B cell (primary cell): ENCODE measurements at regions of chr9 and their contacts with region 1.

Region 1: DNA sequence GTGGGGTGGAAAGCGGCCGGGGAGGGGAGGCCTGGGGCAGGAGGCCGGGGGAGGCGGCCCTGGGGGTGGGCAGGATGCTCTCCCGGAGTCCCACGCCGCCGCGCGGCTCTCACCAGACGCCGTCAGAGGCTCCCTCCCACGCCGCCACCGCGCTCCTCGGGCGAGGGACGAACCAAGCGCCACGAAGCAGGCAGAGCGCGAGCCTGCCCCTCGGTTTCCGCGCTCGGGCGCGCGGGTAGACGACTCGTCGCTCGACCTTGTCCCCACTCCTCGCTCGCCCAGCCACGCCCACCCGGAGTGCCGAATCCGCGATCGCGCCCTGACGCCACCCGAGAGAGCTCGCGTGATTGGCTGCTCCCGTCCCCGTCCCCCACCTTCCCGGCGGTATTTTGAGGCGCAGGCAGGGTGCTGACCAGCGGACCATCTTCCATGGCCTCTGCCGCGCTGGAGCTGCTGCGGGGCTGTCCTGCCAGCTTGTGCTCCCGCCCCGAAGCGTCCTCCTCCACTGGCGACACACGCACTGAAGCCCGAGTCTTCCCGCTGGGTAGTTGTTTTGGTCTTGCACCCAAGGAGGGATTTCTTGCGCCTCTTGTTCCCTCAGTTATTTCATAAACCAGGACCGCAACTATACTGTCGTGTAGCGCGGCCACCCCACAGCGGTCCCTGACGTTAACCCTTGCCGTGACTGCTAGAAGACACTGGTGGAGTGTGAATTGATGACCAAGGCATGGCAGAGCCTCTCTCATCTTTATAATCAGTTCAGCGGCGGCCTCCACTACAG is at the start of gene GNE:
- DNase-seq: peak; percentile 97
- ATAC-seq: peak; percentile 82
- H3K4me3 ChIP-seq: peak within 1 kb of the TSS; percentile 38 to 75 (median 68)
- H3K4me3 Mint-ChIP-seq: peak within 1 kb of the TSS; percentile 99
- H3K27ac ChIP-seq: peak within 1 kb of the TSS; percentile 87 to 94
- H3K27ac Mint-ChIP-seq: peak within 1 kb of the TSS; percentile 96
- H3K4me1 ChIP-seq: peaks cover 12 to 15% of the 10 kb centered on the region in 2 donors
- H3K4me1 Mint-ChIP-seq: peaks cover 17% of the 10 kb centered on the region
- H3K27me3 ChIP-seq: no peaks in the 10 kb centered on the region
- H3K27me3 Mint-ChIP-seq: no peaks in the 10 kb centered on the region
- CTCF ChIP-seq: no peak
- total RNA-seq, gene GNE: 20.6 and 21.6 TPM in 2 replicates

Region 2: GRCh38 chr9:36092509-36093215 is 165.7 kb before region 1 on chr9:
- CTCF ChIA-PET with region 1: no interaction called
- POLR2A ChIA-PET with region 1: no interaction called
- intact Hi-C with region 1: loop called (anchors 2 kb)
- DNase-seq: peak; percentile 76
- ATAC-seq: peak; percentile 98
- H3K4me3 ChIP-seq: peak overlapping the region in 1 of 5 experiments; percentile 41
- H3K4me3 Mint-ChIP-seq: peak overlapping the region; percentile 69
- H3K27ac ChIP-seq: peak overlapping the region; percentile 48 to 83
- H3K27ac Mint-ChIP-seq: peak overlapping the region; percentile 84
- H3K4me1 ChIP-seq: peaks cover 13 to 15% of the 10 kb centered on the region in 2 donors
- H3K4me1 Mint-ChIP-seq: peaks cover 14% of the 10 kb centered on the region
- H3K27me3 ChIP-seq: no peaks in the 10 kb centered on the region
- H3K27me3 Mint-ChIP-seq: no peaks in the 10 kb centered on the region
- CTCF ChIP-seq: no peak

Region 3: DNA sequence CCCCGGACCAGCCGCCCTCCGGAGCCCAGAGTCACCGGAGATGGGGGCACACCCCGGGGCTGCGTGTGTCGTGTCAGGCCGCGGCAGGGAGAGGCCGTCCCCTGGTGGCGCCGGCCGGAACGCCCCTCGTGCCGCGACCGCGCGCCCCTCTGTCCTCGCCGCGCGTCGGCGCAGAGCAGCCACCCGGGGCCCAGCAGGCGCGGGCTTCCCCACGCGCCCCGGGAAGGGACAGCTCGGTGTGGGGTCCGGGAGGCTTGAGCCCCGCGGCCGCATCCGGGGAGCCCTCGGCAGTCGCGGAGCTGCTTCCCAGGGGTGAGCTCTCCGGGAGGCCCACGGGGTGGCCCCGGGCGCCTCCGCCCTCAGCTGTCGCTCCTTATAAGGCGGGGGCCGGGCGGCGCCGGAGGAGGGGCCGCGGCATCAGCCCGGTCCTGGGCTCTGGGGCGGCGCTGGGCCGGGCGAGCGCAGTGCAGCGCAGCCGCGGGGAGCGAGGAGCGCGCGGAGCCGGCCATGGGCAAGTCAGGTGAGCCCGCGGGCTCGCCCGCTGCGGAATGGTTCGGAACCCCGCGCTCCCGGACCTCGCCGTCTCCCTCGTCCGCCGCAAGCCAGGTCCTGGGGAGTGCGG is 122.0 kb before region 1 on chr9 and contains the start of gene GLIPR2:
- CTCF ChIA-PET with region 1: no interaction called
- POLR2A ChIA-PET with region 1: no interaction called
- intact Hi-C with region 1: loop called (anchors 5 kb)
- DNase-seq: peak; percentile 86
- ATAC-seq: peak; percentile 99
- H3K4me3 ChIP-seq: peak within 1 kb of the TSS; percentile 47 to 79 (median 68)
- H3K4me3 Mint-ChIP-seq: peak within 1 kb of the TSS; percentile 96
- H3K27ac ChIP-seq: peak within 1 kb of the TSS; percentile 11 to 75
- H3K27ac Mint-ChIP-seq: peak within 1 kb of the TSS; percentile 93
- H3K4me1 ChIP-seq: peaks cover 38 to 39% of the 10 kb centered on the region in 2 donors
- H3K4me1 Mint-ChIP-seq: peaks cover 50% of the 10 kb centered on the region
- H3K27me3 ChIP-seq: no peaks in the 10 kb centered on the region
- H3K27me3 Mint-ChIP-seq: no peaks in the 10 kb centered on the region
- CTCF ChIP-seq: peak; percentile 17
- total RNA-seq, gene GLIPR2: 13.7 and 15.2 TPM in 2 replicates

Region 4: GRCh38 chr9:36328798-36329411 is 70.5 kb after region 1 on chr9:
- CTCF ChIA-PET with region 1: interaction called, 17 read pairs
- POLR2A ChIA-PET with region 1: no interaction called
- intact Hi-C with region 1: no loop called
- DNase-seq: peak; percentile 76
- ATAC-seq: peak; percentile 31
- H3K4me3 ChIP-seq: no peak overlapping the region
- H3K4me3 Mint-ChIP-seq: no peak overlapping the region
- H3K27ac ChIP-seq: no peak overlapping the region
- H3K27ac Mint-ChIP-seq: no peak overlapping the region
- H3K4me1 ChIP-seq: no peaks in the 10 kb centered on the region
- H3K4me1 Mint-ChIP-seq: peaks cover 2% of the 10 kb centered on the region
- H3K27me3 ChIP-seq: no peaks in the 10 kb centered on the region
- H3K27me3 Mint-ChIP-seq: no peaks in the 10 kb centered on the region
- CTCF ChIP-seq: peak; percentile 85

Region 5: DNA sequence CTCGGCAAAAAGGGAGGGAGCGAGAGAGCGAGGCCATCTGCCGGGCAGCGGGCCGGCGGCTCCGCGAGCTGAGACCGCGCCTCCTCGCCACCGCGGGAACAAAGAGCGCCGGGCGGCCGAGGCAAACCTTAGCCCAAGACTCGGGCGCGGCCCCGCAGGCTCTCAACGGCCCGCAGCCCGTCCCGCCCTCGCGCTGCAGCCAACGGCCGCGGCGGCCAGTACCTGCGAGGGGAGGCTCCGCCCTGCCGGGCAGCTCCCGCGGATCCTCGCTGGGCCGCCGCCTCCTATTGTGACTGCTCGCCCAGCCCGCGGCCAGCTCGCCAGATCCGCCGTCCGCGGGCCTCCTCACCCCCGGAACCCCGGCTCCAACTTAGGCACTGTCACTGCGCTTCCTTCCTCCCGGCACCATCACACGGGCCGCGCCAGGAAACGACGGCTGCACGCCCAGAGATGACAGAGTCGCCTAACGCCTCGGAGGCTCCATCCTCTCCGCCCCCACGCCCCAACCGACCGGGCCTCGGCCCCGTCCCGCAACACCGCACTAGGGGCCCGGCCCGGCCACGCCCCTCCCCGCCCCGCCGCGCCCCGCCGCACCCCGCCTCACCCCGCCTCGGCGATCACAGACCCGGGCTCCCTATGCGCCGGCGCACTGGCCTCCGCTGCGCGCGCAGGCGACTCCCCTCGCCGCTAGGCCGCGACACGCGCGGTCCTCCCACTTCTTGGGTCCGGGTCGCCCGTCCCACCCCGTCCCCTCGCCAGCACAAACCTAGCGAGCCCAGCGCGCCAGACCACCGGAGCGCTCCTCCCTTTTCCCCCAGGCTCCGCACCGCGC is 142.2 kb after region 1 on chr9:
- CTCF ChIA-PET with region 1: no interaction called
- POLR2A ChIA-PET with region 1: no interaction called
- intact Hi-C with region 1: loop called (anchors 1 kb)
- DNase-seq: peak; percentile 97
- ATAC-seq: peak; percentile 79
- H3K4me3 ChIP-seq: peak overlapping the region; percentile 72 to 90 (median 81)
- H3K4me3 Mint-ChIP-seq: peak overlapping the region; percentile 88
- H3K27ac ChIP-seq: peak overlapping the region; percentile 94 to 98
- H3K27ac Mint-ChIP-seq: peak overlapping the region; percentile 93
- H3K4me1 ChIP-seq: peaks cover 18 to 21% of the 10 kb centered on the region in 2 donors
- H3K4me1 Mint-ChIP-seq: peaks cover 34% of the 10 kb centered on the region
- H3K27me3 ChIP-seq: no peaks in the 10 kb centered on the region
- H3K27me3 Mint-ChIP-seq: no peaks in the 10 kb centered on the region
- CTCF ChIP-seq: no peak

Region 6: DNA sequence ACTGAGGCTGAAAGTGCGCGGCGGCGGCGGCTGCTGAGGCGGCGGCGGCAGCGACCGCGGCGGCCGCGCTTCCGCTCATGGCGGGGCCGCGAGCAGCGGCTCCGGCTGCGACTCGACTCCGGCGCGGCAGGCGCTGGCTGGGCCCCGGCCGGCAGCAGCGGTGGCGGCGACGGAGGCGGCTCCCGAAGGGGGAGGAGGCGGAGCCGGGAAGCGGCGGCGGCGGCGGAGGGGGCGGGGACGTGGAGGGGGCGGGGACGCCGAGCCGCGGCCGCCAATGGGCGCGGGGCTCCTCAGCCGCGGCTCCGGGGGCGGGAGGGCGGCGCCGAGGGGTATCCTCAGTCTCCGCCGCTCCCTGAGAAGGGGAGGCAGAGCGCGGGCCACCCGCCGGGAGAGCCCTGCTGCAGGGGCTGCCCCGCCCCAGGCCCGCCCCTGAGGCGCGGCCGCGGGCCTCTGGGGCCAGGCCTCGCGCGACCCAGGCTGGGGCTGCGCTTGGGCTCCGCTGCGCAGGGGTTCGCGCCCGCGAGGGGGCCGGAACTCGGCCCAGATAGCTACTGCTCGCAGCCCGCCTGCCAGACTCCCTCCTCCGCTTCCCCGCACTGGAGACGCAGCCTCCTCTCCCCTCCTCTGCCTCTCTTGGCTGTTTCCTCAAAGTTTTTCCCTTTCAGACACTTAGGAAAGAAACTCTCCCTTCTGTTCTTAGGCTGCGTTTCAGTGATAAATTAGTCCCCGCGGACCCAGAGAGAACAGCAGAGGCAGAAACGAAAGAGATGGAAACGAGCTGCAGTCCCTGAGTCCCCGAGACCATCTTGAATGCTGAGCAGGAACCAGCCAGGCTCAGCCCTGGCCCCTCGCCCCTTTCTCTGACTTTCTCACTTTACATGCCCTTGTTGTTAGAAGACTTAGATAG is 229.3 kb after region 1 on chr9:
- CTCF ChIA-PET with region 1: no interaction called
- POLR2A ChIA-PET with region 1: no interaction called
- intact Hi-C with region 1: loop called (anchors 1 kb)
- DNase-seq: peak; percentile 93
- ATAC-seq: peak; percentile 90
- H3K4me3 ChIP-seq: peak overlapping the region; percentile 46 to 96 (median 61)
- H3K4me3 Mint-ChIP-seq: peak overlapping the region; percentile 96
- H3K27ac ChIP-seq: peak overlapping the region; percentile 94 to 97
- H3K27ac Mint-ChIP-seq: peak overlapping the region; percentile 99
- H3K4me1 ChIP-seq: peaks cover 26 to 30% of the 10 kb centered on the region in 2 donors
- H3K4me1 Mint-ChIP-seq: peaks cover 51% of the 10 kb centered on the region
- H3K27me3 ChIP-seq: no peaks in the 10 kb centered on the region
- H3K27me3 Mint-ChIP-seq: no peaks in the 10 kb centered on the region
- CTCF ChIP-seq: no peak

Region 7: GRCh38 chr9:36572515-36573418 is 314.4 kb after region 1 on chr9 and contains the start of gene MELK:
- CTCF ChIA-PET with region 1: no interaction called
- POLR2A ChIA-PET with region 1: no interaction called
- intact Hi-C with region 1: loop called (anchors 5 kb)
- DNase-seq: peak; percentile 86
- ATAC-seq: peak; percentile 90
- H3K4me3 ChIP-seq: peak within 1 kb of the TSS; percentile 67 to 97 (median 81)
- H3K4me3 Mint-ChIP-seq: peak within 1 kb of the TSS; percentile 90
- H3K27ac ChIP-seq: peak within 1 kb of the TSS; percentile 18 to 67
- H3K27ac Mint-ChIP-seq: peak within 1 kb of the TSS; percentile 71
- H3K4me1 ChIP-seq: peaks cover 8 to 16% of the 10 kb centered on the region in 2 donors
- H3K4me1 Mint-ChIP-seq: peaks cover 13% of the 10 kb centered on the region
- H3K27me3 ChIP-seq: peaks cover 0 to 2% (median 0%) of the 10 kb centered on the region in 4 experiments
- H3K27me3 Mint-ChIP-seq: peaks cover 4% of the 10 kb centered on the region
- CTCF ChIP-seq: no peak
- total RNA-seq, gene MELK: 0.17 TPM in 1 of 2 replicates, not detected in the other